Posterior vena cava (tissue), 2 donors: ENCODE measurements at regions of chr19 and their contacts with region 1.

Region 1: DNA sequence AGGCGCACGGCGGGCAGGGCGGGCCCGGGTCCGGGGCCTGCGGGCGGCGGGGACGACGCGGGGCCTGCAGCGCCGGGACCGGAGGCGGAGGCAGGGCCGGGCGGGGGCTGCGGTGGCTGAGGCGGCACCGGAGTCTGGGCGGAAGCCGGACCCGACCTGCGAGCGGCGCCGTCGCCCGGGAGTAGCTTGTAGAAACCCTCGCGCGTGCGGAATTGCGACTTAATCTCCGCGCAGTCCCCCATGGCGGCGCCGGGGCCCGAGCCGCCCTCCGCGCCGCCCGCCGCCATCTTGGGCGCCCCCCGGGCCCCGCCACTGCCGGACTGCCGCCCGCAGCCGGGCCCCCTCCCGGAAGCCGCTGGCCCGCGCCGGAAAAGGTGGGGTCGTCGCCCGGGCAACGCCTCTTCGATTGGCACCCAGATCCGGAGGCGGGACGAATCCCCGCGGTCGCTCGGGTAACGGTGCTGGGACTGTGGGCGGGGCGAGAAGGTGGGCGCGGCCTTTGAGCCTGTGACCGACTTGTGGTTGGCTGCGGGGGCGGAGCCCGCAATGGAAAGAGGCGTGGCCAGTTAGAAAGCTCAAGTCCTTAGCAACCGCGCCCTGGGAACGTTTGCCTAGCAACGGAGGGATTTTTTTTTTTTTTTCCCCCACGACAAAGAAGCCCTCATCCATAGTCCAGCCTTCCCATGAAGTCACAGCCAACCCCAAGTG is at the start of gene DMWD:
- DNase-seq: peak; percentile 100
- total RNA-seq, gene DMWD: 50.9 to 61.1 TPM

Region 2: GRCh38 chr19:45717166-45717982 is 75.2 kb before region 1 on chr19:
- intact Hi-C with region 1: loop called in 1 of 2 experiments (anchors 10 kb)
- DNase-seq: peak; percentile 100